Caco-2 (cell line): ENCODE measurements at regions of chr1 and their contacts with region 1.

Region 1: DNA sequence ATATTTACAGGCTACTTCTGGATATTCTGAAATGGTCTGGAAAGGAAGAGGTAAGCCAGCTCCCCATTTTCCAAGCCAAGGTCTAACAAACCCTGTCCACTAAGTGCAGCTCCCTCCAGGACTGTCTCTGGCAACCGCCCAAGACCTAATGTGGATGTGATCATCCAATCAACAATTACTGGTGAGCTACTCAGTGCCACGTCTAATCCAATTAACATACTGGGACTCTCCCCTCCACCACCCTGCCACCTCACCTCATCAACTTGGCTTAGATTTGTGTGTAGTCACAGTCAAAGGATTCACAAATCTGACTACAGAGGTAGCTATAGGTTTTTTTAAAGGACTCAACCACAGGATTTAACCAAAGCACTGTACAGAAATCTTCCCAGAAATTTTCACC is 25.4 kb upstream of the S100A7 start:
- DNase-seq: no peak
- H3K4me3 ChIP-seq: no peak overlapping the region
- H3K4me3 Mint-ChIP-seq: no peak overlapping the region
- H3K27ac Mint-ChIP-seq: no peak overlapping the region
- H3K4me1 ChIP-seq: peaks cover 6% of the 10 kb centered on the region; the same call in 1 of the 2 replicates
- H3K4me1 Mint-ChIP-seq: peaks cover 11% of the 10 kb centered on the region
- H3K27me3 ChIP-seq: no peaks in the 10 kb centered on the region; the same call in 1 of the 2 replicates
- H3K27me3 Mint-ChIP-seq: peaks cover 10% of the 10 kb centered on the region
- CTCF ChIP-seq: no peak

Region 2: DNA sequence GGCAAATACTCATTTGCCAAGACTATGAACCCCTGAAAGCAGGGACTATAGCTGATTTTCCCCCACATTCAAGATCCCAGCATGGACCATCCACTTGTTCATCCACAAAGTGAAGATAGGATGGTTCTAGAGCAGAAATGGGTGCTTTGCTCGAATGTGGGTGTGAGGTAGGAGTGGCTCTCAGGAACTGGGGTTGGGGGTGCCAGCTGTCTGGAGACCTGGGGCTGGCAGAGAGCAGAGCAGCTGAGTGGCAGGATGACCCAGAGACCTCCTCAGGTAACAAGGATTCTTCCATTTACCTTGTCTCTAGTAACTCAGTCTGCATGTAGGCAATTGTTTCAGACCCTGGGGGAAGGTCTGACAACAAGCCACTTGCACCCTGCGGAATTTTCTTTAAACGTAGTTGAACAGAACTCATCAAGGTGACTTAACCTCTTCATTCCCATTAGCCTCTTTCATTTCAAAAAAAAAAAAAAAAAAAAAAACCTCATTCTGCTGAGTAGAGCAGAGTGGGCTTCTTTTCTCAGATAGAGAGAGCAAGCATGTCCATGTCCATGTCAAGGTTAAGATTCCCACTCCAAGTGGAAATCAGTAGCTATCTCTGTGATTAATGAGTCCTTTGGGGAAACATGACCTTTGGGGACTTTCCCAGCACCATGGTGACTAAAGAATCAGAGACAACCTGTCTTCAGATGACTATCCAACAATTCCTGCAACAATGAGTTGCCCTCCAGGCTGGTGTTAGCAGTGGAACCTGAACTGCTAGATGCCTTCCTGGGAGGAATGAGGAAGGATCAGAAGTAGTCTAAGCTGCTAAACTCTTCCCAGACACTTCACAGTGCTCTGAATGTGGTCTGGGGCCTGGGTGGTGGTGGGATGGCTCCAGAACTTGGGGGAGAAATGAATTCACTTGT is 122.0 kb before region 1 on chr1:
- CTCF ChIA-PET with region 1: no interaction called
- POLR2A ChIA-PET with region 1: interaction called, 11 read pairs
- intact Hi-C with region 1: no loop called
- DNase-seq: no peak
- H3K4me3 ChIP-seq: no peak overlapping the region
- H3K4me3 Mint-ChIP-seq: no peak overlapping the region
- H3K27ac Mint-ChIP-seq: no peak overlapping the region
- H3K4me1 ChIP-seq: peaks cover 28% of the 10 kb centered on the region
- H3K4me1 Mint-ChIP-seq: peaks cover 6% of the 10 kb centered on the region
- H3K27me3 ChIP-seq: no peaks in the 10 kb centered on the region
- H3K27me3 Mint-ChIP-seq: no peaks in the 10 kb centered on the region
- CTCF ChIP-seq: no peak

Region 3: GRCh38 chr1:153553830-153554541 is 68.1 kb after region 1 on chr1:
- CTCF ChIA-PET with region 1: no interaction called
- POLR2A ChIA-PET with region 1: no interaction called
- intact Hi-C with region 1: no loop called
- DNase-seq: no peak
- H3K4me3 ChIP-seq: no peak overlapping the region
- H3K4me3 Mint-ChIP-seq: no peak overlapping the region
- H3K27ac Mint-ChIP-seq: no peak overlapping the region
- H3K4me1 ChIP-seq: peaks cover 22% of the 10 kb centered on the region
- H3K4me1 Mint-ChIP-seq: peaks cover 23% of the 10 kb centered on the region
- H3K27me3 ChIP-seq: no peaks in the 10 kb centered on the region
- H3K27me3 Mint-ChIP-seq: no peaks in the 10 kb centered on the region
- CTCF ChIP-seq: no peak